Tibial artery (tissue), 4 donors: ENCODE measurements at regions of chr1 and their contacts with region 1.

Region 1: GRCh38 chr1:180863158-180863775 is 49.4 kb upstream of the KIAA1614 start:
- DNase-seq: no peak
- H3K4me3 ChIP-seq: no peak overlapping the region
- H3K27ac ChIP-seq: no peak overlapping the region
- H3K4me1 ChIP-seq: peaks cover 0 to 7% (median 0%) of the 10 kb centered on the region in 4 donors
- H3K27me3 ChIP-seq: no peaks in the 10 kb centered on the region
- CTCF ChIP-seq: peak; percentile 66 to 83

Region 2: DNA sequence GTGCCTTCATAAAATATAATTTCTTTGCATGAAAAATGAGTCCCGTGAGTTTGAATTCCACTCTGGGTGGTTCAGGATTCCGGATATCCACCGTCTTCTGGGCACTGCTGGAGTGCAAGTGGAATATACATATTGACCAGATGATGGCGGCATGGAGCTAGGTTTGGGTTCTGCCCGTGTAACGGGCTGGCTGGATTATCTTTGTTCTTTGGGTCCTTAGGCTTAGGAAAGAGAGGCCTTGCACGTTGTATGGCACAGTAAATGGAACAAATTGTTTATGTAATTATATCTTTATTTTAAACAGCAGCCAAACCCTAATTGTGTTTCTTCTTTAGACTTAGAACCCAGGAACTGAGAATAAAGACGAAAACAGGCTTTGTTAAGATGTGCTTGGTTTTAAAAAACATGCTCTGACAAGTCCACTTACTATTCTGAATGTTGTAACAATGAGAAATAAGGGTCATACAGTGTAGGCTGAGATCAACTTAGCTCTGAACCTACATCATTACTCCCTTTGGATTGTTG is 347.3 kb before region 1 on chr1:
- intact Hi-C with region 1: loop called (anchors 5 kb)
- DNase-seq: peak in 1 of 2 donors; percentile 65
- H3K4me3 ChIP-seq: no peak overlapping the region
- H3K27ac ChIP-seq: no peak overlapping the region
- H3K4me1 ChIP-seq: peaks cover 0 to 4% (median 1%) of the 10 kb centered on the region in 4 donors
- H3K27me3 ChIP-seq: no peaks in the 10 kb centered on the region
- CTCF ChIP-seq: peak; percentile 78 to 88

Region 3: DNA sequence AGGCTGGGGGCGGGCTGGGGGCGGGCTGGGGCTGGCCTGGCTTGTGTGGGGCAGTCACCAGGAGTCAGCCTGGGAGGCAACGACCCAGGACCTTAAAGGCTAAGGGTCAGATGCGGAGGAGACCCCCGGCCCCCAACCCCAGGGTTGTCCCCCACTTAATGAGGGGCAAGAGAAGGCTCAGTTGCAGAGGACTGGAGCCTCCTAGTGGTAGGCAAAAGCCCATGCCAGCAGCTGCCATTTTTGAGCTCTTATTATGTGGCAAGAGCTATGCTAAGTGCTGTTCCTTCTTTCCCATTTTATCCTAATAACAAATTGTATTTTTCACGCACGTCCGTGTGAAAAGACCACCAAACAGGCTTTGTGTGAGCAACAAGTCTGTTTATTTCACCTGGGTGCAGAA is 57.4 kb after region 1 on chr1:
- intact Hi-C with region 1: no loop called
- DNase-seq: no peak
- H3K4me3 ChIP-seq: no peak overlapping the region
- H3K27ac ChIP-seq: no peak overlapping the region
- H3K4me1 ChIP-seq: peaks cover 0 to 2% (median 0%) of the 10 kb centered on the region in 4 donors
- H3K27me3 ChIP-seq: no peaks in the 10 kb centered on the region
- CTCF ChIP-seq: peak in 1 of 2 experiments; percentile 4

Region 4: DNA sequence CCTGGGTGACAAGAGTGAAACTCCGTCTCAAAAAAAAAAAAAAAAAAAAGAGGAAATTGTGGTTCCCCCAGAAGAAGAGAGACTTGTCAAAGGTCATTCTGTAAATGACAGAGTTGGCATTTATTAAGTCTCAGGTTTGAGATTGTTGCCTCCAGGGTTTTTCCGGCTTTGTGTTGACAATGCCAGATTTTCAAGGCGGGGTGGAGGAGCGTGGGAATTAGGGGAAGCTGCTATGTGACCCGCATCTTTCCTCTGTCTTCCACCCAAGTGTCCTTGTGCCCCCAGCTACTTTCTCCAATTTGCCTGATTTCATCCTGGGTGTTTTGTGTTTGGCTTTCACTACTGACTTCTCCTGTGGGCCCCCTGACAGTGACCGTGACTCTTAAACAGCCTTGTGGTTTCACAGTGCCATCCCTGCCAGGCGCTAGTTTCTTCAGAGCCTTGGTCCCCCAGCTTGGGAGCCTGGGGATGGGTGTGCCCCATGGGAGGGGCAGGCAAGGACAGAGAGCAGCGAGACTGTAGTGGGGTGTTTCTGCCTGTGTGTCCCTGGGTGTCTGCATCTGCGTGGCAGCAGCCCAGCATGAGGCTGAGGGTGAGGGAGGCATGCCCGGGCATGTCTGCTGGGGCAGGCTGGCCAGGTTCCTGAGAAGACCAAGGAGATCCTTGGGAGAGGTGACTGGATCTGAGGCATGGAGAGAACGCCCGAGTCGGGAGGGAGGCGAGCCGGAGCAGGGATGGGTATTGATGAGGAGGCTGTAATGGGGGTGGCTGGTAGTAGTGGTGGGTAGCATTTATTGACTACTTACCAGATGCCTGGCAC is 271.5 kb after region 1 on chr1:
- intact Hi-C with region 1: no loop called
- DNase-seq: peak in 1 of 2 donors; percentile 81
- H3K4me3 ChIP-seq: no peak overlapping the region
- H3K27ac ChIP-seq: peak overlapping the region; percentile 10 to 59
- H3K4me1 ChIP-seq: peaks cover 0 to 25% (median 15%) of the 10 kb centered on the region in 4 donors
- H3K27me3 ChIP-seq: no peaks in the 10 kb centered on the region
- CTCF ChIP-seq: no peak